ENCODE measurements at regions of chr14 and their contacts with region 1.

Region 1: DNA sequence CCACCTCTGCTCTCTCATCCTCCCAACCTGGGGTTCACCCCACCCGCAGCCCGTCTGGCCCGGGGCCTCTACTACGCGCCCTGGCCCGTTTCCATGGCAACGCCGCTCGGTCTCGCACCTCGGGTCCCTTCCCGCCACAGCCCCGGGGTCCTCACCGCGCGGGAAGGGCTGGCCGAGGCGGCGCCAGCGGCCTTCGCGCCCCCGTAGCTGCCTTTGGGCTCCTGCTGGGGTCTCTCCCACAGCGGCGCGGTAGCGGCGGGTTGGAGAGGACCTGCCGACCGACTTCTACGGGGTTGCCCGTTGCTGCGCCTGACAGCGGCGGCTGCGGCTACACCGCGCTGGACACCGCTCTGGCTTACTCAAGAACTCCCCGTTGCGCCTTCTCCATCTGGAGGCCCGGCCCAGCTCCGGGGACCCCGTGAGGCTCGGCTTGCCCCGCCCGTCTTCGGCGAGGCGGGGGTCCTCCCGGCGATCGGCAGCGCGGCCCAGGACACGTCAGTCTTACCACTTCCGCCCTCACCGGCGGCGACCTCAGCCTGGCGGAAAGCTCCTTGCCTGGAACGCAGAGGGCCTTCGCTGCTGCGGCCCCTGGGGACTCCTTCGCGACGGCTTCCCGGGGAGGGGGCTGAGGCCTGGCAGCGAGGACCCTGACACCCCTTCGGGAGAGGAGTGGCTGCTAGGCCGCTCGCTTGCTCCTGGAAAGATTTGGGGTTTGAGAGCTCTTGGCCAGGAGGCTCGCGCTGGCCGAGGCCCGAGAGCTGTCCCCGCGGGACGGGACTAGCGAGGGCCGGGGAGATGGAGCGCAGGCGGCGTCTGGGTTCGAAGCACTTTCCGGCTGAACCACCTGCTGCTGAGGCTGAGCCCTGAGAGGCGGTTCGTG is at the start of gene TM9SF1:
- DNase-seq: peak; percentile 90
- H3K4me3 Mint-ChIP-seq: peak within 1 kb of the TSS; percentile 96
- H3K27ac Mint-ChIP-seq: peak within 1 kb of the TSS; percentile 95
- H3K4me1 Mint-ChIP-seq: peaks cover 64% of the 10 kb centered on the region
- H3K27me3 Mint-ChIP-seq: no peaks in the 10 kb centered on the region
- total RNA-seq, gene TM9SF1: 30.8 to 35.1 TPM

Region 2: DNA sequence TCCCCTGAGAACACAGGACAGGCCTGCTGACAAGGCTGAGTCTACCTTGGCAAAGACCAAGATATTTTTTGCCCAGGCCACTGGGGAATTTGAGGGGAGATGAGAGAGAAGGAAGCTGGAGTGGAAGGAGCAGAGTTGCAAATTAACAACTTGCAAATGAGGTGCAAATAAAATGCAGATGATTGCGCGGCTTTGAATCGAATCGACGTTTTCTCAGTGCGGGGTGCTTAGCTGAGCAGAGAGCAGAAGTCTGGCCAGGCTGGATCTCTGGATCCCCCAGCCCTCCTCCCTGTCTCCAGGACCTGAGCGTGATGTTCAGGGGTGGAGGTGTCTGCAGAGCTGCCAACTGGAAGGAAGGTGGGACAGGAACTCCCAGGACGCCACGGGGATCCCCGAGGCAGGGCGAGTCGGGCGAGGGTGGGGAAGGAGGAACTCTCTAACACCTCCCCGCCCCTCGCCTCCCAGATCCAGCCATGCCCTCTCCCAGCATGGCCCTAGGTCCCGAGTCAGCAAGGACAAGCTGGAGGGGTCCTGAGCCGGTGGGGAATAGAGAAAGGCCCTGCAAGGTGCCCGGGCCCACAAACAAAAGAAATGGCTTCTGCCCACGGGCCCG is 144.1 kb before region 1 on chr14:
- CTCF ChIA-PET with region 1: no interaction called
- POLR2A ChIA-PET with region 1: no interaction called
- DNase-seq: peak; percentile 22
- H3K4me3 Mint-ChIP-seq: peak overlapping the region; percentile 69
- H3K27ac Mint-ChIP-seq: no peak overlapping the region
- H3K4me1 Mint-ChIP-seq: peaks cover 23% of the 10 kb centered on the region
- H3K27me3 Mint-ChIP-seq: peaks cover 30% of the 10 kb centered on the region

Region 3: GRCh38 chr14:24135834-24136542 is 59.4 kb before region 1 on chr14 and contains the start of gene PSME1:
- CTCF ChIA-PET with region 1: no interaction called
- POLR2A ChIA-PET with region 1: interaction called, 22 read pairs
- DNase-seq: peak; percentile 96
- H3K4me3 Mint-ChIP-seq: peak within 1 kb of the TSS; percentile 93
- H3K27ac Mint-ChIP-seq: peak within 1 kb of the TSS; percentile 89
- H3K4me1 Mint-ChIP-seq: peaks cover 53% of the 10 kb centered on the region
- H3K27me3 Mint-ChIP-seq: no peaks in the 10 kb centered on the region
- total RNA-seq, gene PSME1: 391 to 397 TPM

Region 4: GRCh38 chr14:24141097-24141880 is 54.1 kb before region 1 on chr14 and contains the start of gene EMC9:
- CTCF ChIA-PET with region 1: interaction called, 4 read pairs
- POLR2A ChIA-PET with region 1: interaction called, 38 read pairs
- DNase-seq: peak; percentile 100
- H3K4me3 Mint-ChIP-seq: peak within 1 kb of the TSS; percentile 93
- H3K27ac Mint-ChIP-seq: peak within 1 kb of the TSS; percentile 92
- H3K4me1 Mint-ChIP-seq: peaks cover 73% of the 10 kb centered on the region
- H3K27me3 Mint-ChIP-seq: no peaks in the 10 kb centered on the region
- total RNA-seq, gene EMC9: 45.0 to 51.7 TPM

Region 5: GRCh38 chr14:24146978-24147760 is 48.3 kb before region 1 on chr14 and contains the start of gene RNF31:
- CTCF ChIA-PET with region 1: interaction called, 4 read pairs
- POLR2A ChIA-PET with region 1: interaction called, 38 read pairs
- DNase-seq: peak; percentile 99
- H3K4me3 Mint-ChIP-seq: peak within 1 kb of the TSS; percentile 96
- H3K27ac Mint-ChIP-seq: peak within 1 kb of the TSS; percentile 99
- H3K4me1 Mint-ChIP-seq: peaks cover 58% of the 10 kb centered on the region
- H3K27me3 Mint-ChIP-seq: no peaks in the 10 kb centered on the region
- total RNA-seq, gene RNF31: 122 to 129 TPM

Region 6: GRCh38 chr14:24179961-24180796 is 15.3 kb before region 1 on chr14:
- CTCF ChIA-PET with region 1: interaction called, 3 read pairs
- POLR2A ChIA-PET with region 1: interaction called, 22 read pairs
- DNase-seq: no peak
- H3K4me3 Mint-ChIP-seq: no peak overlapping the region
- H3K27ac Mint-ChIP-seq: no peak overlapping the region
- H3K4me1 Mint-ChIP-seq: peaks cover 3% of the 10 kb centered on the region
- H3K27me3 Mint-ChIP-seq: no peaks in the 10 kb centered on the region

Region 7: DNA sequence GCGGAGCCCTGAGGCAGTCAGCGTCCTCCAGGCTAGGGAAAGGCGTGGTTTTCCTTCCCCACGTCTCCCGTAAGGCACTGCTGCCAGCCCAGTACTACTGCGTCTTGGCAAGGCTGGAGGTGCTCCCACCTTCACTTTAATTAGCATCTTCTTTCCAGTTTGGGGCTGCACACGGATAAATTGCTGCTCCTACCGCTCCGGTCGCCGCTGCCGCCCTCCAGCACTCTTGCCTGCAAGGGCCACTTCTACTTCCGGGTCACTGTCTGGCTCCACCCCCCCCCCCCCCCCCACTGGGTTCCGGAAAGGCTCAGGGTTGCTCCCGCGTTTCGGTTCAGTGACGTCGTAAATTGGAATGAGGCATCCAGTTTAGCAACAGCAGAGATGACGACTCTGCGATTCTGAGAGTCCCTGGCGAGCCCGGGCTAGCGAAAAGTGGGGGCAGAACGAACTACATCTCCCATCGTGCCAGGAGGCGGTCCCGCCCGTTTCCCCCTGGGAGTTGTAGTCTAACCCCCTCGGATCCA is 36.8 kb after region 1 on chr14 and contains the start of gene NEDD8:
- CTCF ChIA-PET with region 1: interaction called, 3 read pairs
- POLR2A ChIA-PET with region 1: interaction called, 21 read pairs
- DNase-seq: peak; percentile 92
- H3K4me3 Mint-ChIP-seq: peak within 1 kb of the TSS; percentile 81
- H3K27ac Mint-ChIP-seq: peak within 1 kb of the TSS; percentile 83
- H3K4me1 Mint-ChIP-seq: peaks cover 59% of the 10 kb centered on the region
- H3K27me3 Mint-ChIP-seq: no peaks in the 10 kb centered on the region
- total RNA-seq, gene NEDD8: 190 to 197 TPM

Region 8: GRCh38 chr14:24289649-24290249 is 94.3 kb after region 1 on chr14:
- CTCF ChIA-PET with region 1: no interaction called
- POLR2A ChIA-PET with region 1: no interaction called
- DNase-seq: peak; percentile 76
- H3K4me3 Mint-ChIP-seq: no peak overlapping the region
- H3K27ac Mint-ChIP-seq: no peak overlapping the region
- H3K4me1 Mint-ChIP-seq: peaks cover 23% of the 10 kb centered on the region
- H3K27me3 Mint-ChIP-seq: peaks cover 22% of the 10 kb centered on the region